ENCODE measurements at regions of chr12 and their contacts with region 1.

Region 1: GRCh38 chr12:108495054-108495453 is 20.0 kb upstream of the FICD start:
- DNase-seq: peak; percentile 19 to 41 (median 27)
- H3K4me3 ChIP-seq: no peak overlapping the region
- H3K4me3 Mint-ChIP-seq: no peak overlapping the region
- H3K27ac ChIP-seq: no peak overlapping the region
- H3K27ac Mint-ChIP-seq: no peak overlapping the region
- H3K4me1 ChIP-seq: no peaks in the 10 kb centered on the region
- H3K4me1 Mint-ChIP-seq: no peaks in the 10 kb centered on the region
- H3K27me3 ChIP-seq: peaks cover 0 to 11% of the 10 kb centered on the region in 2 donors
- H3K27me3 Mint-ChIP-seq: peaks cover 9 to 26% (median 12%) of the 10 kb centered on the region in 3 donors
- CTCF ChIP-seq: peak; percentile 86

Region 2: DNA sequence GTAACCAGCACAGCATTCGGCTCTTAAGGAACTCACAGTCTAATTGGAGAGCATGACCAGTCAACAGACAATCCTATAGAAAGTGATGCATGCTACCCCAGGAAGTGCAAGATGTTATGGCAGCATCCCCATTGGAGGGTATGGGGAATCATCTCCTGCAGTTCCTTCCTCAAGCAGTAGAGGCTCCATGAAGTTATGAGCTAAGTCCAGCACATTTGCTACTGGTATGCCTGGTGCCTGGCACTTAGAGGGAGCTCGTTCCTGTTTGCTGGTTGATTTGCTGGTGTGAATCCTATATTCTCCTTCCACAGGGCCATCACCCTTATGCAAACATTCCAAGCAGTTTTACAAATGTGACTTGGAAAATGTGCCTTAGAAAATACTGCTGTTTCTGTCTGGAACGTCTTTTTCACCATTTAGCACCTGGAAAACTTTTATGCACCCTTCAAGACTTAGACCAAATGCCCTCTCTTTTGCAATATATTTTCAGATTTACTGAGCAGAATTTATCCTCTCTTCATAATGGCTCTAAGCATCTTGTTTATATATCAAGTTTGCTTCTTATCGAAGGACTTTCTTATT is 502.1 kb before region 1 on chr12:
- intact Hi-C with region 1: loop called (anchors 10 kb)
- DNase-seq: peak; percentile 2 to 15 (median 5)
- H3K4me3 ChIP-seq: no peak overlapping the region
- H3K4me3 Mint-ChIP-seq: no peak overlapping the region
- H3K27ac ChIP-seq: no peak overlapping the region
- H3K27ac Mint-ChIP-seq: no peak overlapping the region
- H3K4me1 ChIP-seq: no peaks in the 10 kb centered on the region
- H3K4me1 Mint-ChIP-seq: no peaks in the 10 kb centered on the region
- H3K27me3 ChIP-seq: peaks cover 0 to 12% of the 10 kb centered on the region in 2 donors
- H3K27me3 Mint-ChIP-seq: peaks cover 11 to 23% (median 18%) of the 10 kb centered on the region in 3 donors
- CTCF ChIP-seq: peak; percentile 70

Region 3: GRCh38 chr12:108605000-108605689 is 110.1 kb after region 1 on chr12:
- intact Hi-C with region 1: no loop called
- DNase-seq: peak in 1 of 3 donors; percentile 33
- H3K4me3 ChIP-seq: no peak overlapping the region
- H3K4me3 Mint-ChIP-seq: no peak overlapping the region
- H3K27ac ChIP-seq: no peak overlapping the region
- H3K27ac Mint-ChIP-seq: peak overlapping the region in 1 of 7 donors; percentile 13
- H3K4me1 ChIP-seq: no peaks in the 10 kb centered on the region
- H3K4me1 Mint-ChIP-seq: no peaks in the 10 kb centered on the region
- H3K27me3 ChIP-seq: peaks cover 0 to 5% of the 10 kb centered on the region in 2 donors
- H3K27me3 Mint-ChIP-seq: peaks cover 11 to 16% (median 15%) of the 10 kb centered on the region in 3 donors
- CTCF ChIP-seq: no peak